ENCODE measurements at regions of chr2 and their contacts with region 1.

Region 1: GRCh38 chr2:55223958-55224760 is 7.9 kb downstream of the CLHC1 start:
- DNase-seq: no peak
- H3K4me3 Mint-ChIP-seq: peak overlapping the region; percentile 66
- H3K27ac Mint-ChIP-seq: peak overlapping the region; percentile 73
- H3K4me1 Mint-ChIP-seq: peaks cover 29% of the 10 kb centered on the region
- H3K27me3 Mint-ChIP-seq: no peaks in the 10 kb centered on the region

Region 2: GRCh38 chr2:55010149-55010591 is 214.0 kb before region 1 on chr2:
- intact Hi-C with region 1: loop called (anchors 5 kb)
- DNase-seq: peak; percentile 40
- H3K4me3 Mint-ChIP-seq: peak overlapping the region; percentile 85
- H3K27ac Mint-ChIP-seq: peak overlapping the region; percentile 70
- H3K4me1 Mint-ChIP-seq: peaks cover 56% of the 10 kb centered on the region
- H3K27me3 Mint-ChIP-seq: no peaks in the 10 kb centered on the region

Measured in activated T-helper 2 cell treated with anti-CD3 and anti-CD28 coated beads, Interferon-gamma antibody, Interleukin-2, Interleukin-4, amounts not matched to agents 10 μg/mL and 5 μg/mL and 100 μg/mL, durations not matched to agents 14 hours and 24 hours and 36 hours (primary cell).